Cardiac septum (tissue), 1 donor: ENCODE measurements at regions of chr6 and their contacts with region 1.

Region 1: DNA sequence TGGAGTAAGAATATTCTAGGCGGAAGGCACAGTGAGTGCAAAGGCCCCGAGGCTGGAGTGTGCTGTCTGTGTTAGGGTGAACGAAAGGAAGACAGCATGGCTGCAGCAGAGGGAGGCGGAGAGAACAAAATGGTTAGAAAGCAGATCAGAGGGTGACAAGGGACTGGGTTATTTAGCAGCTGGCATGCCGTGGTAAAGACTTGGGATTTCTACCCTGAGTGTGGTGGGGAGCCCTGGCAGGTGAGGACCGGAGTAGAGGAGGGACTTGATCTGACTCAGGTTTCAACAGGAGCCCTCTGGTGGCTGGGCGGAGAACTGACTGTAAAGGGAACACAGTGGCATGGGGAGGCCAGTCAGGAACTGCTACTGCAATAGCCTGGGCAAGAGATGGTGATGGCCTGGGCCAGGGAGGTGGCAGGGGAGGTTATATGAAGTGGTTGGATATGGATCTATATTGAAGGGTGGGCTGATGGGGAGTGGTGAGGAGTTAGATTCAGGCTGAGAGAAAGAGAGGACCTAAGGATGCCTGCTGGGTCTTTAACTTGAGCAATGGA is 38.0 kb downstream of the PIM1 start:
- DNase-seq: peak; percentile 94

Region 2: DNA sequence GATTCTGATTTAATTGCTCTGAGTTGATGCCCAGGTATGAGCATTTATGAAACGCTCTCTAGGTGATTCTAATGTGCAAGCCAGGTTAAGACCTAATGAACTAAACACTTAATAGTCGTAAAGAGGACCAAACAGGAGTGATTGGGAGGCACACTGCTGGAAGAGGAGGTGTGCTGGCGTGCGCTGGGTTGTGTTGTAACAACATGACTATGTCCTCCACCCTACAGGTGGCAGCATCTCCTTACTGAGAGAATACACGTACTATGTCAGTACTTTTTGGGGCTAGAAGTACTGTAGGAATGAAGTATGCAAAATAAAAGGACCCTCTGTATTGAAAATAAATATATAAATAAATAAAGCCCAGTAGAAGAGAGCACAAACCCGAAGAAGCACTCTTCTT is 310.4 kb before region 1 on chr6:
- intact Hi-C with region 1: loop called (anchors 10 kb)
- DNase-seq: no peak

Region 3: DNA sequence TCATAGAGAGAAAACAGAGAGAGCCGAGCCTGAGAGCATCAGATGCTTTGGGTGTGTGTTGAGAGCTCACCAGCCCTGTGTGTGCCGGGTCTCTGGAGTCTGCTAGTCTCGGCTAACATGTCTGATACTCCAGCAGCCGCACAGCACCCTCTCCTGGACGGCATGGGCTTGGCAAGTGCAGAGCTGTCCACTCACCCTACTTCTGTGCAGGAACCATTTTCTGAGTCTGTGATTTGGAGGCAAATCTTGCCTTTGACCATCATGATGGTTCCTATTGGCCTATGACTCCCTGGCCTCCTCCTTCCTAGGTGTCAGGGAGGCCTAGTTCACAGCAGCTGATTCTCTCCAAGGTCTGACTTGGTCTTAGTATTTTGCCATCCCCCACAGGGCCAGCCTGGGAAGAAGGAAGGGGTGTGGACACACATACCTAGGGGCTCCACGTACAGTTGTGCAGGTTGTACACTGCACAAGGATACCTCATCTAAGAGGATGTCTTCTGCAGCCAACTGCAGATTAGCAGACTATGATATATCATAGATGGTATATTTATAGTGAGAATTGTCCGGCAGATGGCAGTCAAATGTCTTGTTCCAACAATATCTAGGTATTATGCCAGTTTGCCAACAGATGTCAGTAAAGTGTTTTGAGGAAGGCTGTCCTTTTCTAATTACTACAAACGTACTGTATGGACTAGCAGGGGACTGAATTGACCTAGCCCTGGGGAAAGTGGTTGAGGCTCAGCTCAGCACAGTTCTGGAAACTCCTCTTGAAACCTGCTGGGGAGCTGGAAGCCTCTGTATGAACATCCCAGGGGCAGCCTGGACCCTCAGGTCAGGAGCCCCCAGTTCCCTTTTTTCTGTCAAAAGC is 189.5 kb before region 1 on chr6:
- intact Hi-C with region 1: loop called (anchors 2 kb)
- DNase-seq: peak; percentile 94

Region 4: DNA sequence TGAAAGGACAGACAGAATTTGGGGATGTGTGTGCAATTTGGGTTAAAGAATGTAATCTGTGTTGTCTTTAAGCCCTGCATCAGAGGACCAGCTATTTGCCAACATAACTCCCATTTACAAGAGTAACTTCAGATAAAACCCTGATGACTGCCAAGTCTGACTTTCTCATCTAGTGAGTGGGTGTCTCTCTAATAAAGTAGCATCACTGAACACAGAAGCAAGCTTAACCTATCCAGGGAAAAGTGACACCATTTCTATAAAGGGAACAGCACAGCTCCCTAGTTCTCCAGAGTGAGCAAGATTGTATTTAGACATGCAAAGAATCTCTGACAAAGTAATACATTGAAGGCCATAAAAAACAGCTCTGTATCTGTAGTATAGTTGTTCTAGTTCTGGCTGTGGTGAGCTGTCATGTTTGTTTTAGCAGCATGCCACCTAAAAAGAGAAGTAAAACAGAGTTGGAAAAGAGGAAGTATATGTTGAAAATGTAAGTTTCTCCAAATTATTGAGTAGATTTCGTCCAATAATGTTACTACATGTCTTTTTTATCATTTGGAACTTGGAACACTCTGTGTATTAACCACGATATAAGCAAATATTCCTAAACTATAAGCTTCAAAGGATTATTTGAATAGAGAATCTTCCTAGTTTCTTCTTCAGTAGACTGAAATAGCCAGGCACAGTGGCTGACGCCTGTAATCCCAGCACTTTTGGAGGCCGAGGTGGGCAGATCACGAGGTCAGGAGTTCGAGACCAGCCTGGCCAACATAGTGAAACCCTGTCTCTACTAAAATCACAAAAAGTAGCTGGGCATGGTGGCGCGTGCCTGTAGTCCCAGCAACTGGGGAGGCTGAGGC is 46.8 kb before region 1 on chr6:
- intact Hi-C with region 1: no loop called
- DNase-seq: no peak

Region 5: DNA sequence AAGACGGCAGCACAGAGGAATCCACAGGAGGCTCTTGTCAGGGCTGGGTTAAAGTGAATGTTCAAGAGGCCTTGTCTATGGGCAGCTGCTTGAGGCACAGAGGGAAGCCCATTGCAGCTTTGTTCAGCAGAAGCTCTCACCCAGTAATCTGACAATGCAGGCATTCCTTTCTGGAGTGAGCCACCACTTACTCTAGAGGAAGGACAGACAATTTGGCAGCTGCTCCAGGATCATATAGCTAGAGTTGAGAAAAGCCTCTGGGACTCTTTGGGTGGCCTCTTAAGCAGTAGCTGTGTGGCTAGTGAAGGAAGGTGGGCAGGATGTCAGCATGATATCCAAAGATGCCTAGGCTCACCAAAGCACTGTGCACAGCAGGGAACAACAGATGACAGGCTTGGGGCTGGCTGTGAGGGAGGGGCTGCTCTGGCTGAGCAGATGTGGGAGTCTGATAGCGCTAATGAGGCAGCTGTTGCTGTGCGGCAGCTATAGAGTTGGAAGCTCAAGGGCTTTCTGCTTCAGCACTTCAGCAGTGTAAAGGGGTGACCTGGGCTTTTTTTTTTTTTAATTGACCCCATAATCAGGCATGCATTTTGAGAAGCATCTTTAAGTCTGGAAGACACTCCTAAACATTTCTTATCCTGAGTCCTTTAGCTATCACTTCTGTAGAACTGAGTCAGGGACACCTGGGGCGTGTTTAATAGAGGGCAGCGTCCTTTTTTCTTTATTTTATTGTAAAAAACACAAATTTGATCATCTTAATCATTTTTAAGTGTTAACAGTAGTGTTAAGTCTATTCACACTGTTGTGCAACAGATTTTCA is 252.2 kb after region 1 on chr6:
- intact Hi-C with region 1: no loop called
- DNase-seq: no peak